ENCODE measurements at regions of chr3 and their contacts with region 1.

Region 1: GRCh38 chr3:124486324-124486723 is 243.9 kb upstream of the UMPS start:
- DNase-seq: no peak

Region 2: GRCh38 chr3:124552239-124552638 is 65.9 kb after region 1 on chr3:
- intact Hi-C with region 1: loop called (anchors 2 kb)
- DNase-seq: no peak

Measured in posterior cingulate gyrus (tissue), 11 donors.